ENCODE measurements at regions of chr20 and their contacts with region 1.

Region 1: GRCh38 chr20:41078329-41078728 is 49.7 kb downstream of the TOP1 start:
- DNase-seq: no peak

Region 2: GRCh38 chr20:40990542-40991120 is 87.7 kb before region 1 on chr20:
- intact Hi-C with region 1: loop called (anchors 2 kb)
- DNase-seq: peak; percentile 85

Region 3: DNA sequence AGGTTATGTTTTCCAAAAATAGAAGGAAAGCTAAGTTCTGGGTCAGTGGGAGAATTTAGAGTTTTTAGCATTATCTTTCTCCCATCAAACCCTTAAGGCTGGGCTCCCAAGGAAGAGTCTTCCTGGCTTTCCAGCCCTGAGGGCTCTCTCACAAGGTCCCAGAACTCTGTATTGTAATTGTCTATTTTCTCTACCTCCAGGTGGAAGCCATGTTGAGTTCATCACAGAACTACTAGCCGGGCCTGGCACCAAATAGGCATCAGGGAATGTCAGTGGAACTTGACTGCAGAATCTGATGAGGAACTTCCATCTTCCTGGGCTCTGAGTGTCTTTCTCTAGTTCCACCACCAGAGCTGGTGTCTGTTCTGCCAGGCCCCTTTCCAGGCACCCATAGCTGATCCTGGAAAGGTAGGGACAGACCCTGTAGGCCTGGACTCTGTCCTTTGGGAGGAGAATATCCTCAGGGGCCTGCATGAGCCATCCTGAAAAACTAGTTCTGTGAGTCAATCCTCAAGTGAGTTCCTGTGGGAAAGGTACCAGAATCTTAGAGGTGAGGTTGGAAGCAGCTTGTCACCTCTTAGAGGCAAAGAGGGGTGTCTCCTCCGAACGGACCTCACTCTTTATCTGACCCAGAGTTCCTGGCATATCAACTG is 60.8 kb before region 1 on chr20:
- intact Hi-C with region 1: no loop called
- DNase-seq: no peak

Region 4: GRCh38 chr20:41028348-41029148 is 49.8 kb before region 1 on chr20 and contains the start of gene TOP1:
- intact Hi-C with region 1: loop called (anchors 5 kb)
- DNase-seq: peak; percentile 100
- total RNA-seq, gene TOP1: 23.5 TPM

Region 5: GRCh38 chr20:41205313-41205712 is 127.0 kb after region 1 on chr20:
- intact Hi-C with region 1: no loop called
- DNase-seq: no peak